AG04450 (cell line): ENCODE measurements at regions of chr3 and their contacts with region 1.

Region 1: DNA sequence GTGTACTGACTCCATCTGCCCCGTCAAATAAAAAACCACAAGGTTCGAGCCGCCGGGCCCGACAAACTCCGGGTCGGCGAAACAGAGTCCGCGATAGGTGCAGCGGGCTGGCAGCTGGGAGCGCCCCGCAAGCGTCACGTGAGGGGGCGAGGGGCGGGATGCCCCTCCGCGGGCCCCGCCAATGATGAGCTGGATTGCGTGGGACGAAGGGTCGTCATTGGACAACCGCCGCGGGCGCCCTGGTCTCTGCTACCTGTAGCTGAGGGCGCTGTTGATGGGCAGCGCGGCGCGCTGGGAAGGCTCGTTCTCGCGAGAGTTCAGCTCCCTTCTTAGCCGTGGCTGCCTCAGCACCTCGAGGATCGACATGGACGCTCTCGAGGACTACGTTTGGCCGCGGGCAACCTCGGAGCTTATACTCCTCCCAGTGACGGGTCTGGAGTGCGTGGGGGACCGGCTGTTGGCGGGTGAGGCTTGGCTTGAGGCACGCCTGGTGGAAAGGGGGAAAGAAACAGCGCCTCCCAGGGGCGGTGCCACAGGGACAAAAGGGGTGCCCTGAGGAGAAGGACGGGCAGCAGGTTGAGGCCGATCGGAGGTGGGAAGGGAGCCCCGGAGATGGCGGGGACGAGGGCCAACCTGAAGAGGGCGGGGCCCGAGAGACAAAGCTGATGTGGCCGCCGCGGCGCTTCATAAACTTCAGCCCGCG is at the start of gene WDR6:
- DNase-seq: peak; percentile 96
- H3K4me3 ChIP-seq: peak within 1 kb of the TSS; percentile 93
- H3K27ac ChIP-seq: peak within 1 kb of the TSS; percentile 98
- H3K27me3 ChIP-seq: no peaks in the 10 kb centered on the region
- CTCF ChIP-seq: peak; percentile 35; the same call in 1 of the 2 replicates
- polyA plus RNA-seq, gene WDR6: 101 and 117 TPM in 2 replicates

Region 2: GRCh38 chr3:48949376-48949717 is 57.9 kb before region 1 on chr3:
- CTCF ChIA-PET with region 1: no interaction called
- POLR2A ChIA-PET with region 1: no interaction called
- DNase-seq: no peak
- H3K4me3 ChIP-seq: no peak overlapping the region
- H3K27ac ChIP-seq: no peak overlapping the region
- H3K27me3 ChIP-seq: no peaks in the 10 kb centered on the region
- CTCF ChIP-seq: no peak

Region 3: GRCh38 chr3:49021813-49022687 is 14.8 kb after region 1 on chr3 and contains the start of gene NDUFAF3:
- CTCF ChIA-PET with region 1: interaction called, 24 read pairs
- POLR2A ChIA-PET with region 1: interaction called, 74 read pairs
- DNase-seq: peak; percentile 81
- H3K4me3 ChIP-seq: peak within 1 kb of the TSS; percentile 98
- H3K27ac ChIP-seq: peak within 1 kb of the TSS; percentile 90
- H3K27me3 ChIP-seq: no peaks in the 10 kb centered on the region
- CTCF ChIP-seq: peak; percentile 90
- polyA plus RNA-seq, gene NDUFAF3: 47.0 and 69.2 TPM in 2 replicates

Region 4: DNA sequence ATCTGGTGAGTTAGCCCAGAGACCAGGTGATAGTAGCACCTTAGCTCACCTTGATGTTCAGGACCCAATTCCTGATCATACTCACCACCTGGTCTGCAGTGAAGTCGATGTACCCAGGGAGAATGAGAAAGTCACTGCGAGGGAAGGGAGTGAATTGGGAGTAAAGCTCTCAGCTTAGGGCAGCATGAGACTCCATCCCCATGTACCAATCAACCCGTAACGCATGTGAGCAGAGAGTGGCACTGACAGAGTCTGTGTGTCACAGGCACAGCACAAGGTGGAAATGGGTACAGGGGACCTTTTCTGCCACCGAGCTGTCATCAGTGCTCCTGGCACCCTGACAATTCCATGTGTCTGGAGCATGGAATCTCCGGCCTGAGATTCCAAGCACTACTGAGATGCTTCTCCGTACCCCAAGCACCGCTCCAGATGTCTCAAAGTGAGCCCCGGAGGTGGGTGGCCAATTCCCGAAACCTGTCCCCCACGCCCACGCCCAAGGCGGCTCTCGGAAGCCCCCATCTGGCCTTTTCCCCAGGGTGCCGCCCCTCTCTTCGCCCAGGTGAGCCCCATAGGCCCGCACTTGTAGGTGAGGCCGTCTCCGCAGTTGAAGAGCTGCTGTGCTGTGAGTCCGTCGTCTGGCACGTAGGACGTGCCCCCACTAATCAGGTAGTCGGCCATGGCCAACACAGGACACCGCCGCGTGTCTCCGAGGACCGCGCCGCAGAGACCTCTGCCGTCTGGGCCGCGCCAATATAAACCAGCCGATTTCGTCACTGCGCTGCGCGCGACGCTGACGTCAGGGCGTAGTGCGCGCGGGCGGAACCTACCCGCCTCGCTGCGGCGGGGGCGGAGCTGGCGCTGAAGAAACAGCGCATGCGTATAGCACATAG is 21.7 kb after region 1 on chr3 and contains the start of gene IMPDH2:
- CTCF ChIA-PET with region 1: no interaction called
- POLR2A ChIA-PET with region 1: interaction called, 74 read pairs
- DNase-seq: peak; percentile 81
- H3K4me3 ChIP-seq: peak within 1 kb of the TSS; percentile 87
- H3K27ac ChIP-seq: peak within 1 kb of the TSS; percentile 68
- H3K27me3 ChIP-seq: no peaks in the 10 kb centered on the region
- CTCF ChIP-seq: no peak
- polyA plus RNA-seq, gene IMPDH2: 268 and 284 TPM in 2 replicates